ENCODE measurements at regions of chr6 and their contacts with region 1.

Region 1: DNA sequence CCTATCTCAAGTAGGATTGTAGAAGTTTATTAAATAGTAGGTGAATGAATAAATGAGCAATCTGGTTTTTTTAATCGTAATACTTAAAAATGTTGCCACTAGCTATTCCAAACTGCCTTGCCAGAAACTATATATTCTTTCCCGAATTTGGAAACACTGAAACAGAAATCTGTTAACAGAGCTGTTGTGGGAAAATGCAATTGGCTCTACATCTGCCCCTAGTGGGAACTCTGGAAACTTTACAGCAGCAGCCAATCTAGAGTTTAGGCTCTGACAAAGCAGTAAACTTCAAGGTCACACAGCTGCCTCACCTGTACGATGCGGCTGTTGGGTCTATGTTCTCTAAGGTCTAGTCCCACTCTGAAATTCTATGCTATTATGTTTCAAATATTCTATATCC is 41.7 kb downstream of the SYNE1 start:
- DNase-seq: peak; percentile 19
- H3K4me3 Mint-ChIP-seq: no peak overlapping the region
- H3K27ac Mint-ChIP-seq: no peak overlapping the region
- H3K4me1 Mint-ChIP-seq: peaks cover 7% of the 10 kb centered on the region
- H3K27me3 Mint-ChIP-seq: no peaks in the 10 kb centered on the region
- CTCF ChIP-seq: peak; percentile 34

Region 2: GRCh38 chr6:152575621-152576150 is 19.8 kb before region 1 on chr6:
- CTCF ChIA-PET with region 1: interaction called, 20 read pairs
- POLR2A ChIA-PET with region 1: interaction called, 9 read pairs
- intact Hi-C with region 1: no loop called
- DNase-seq: peak; percentile 89
- H3K4me3 Mint-ChIP-seq: peak overlapping the region; percentile 36
- H3K27ac Mint-ChIP-seq: peak overlapping the region; percentile 94
- H3K4me1 Mint-ChIP-seq: peaks cover 50% of the 10 kb centered on the region
- H3K27me3 Mint-ChIP-seq: no peaks in the 10 kb centered on the region
- CTCF ChIP-seq: no peak

Measured in MCF 10A (cell line).